ENCODE measurements at regions of chr1 and their contacts with region 1.

Region 1: GRCh38 chr1:221573756-221574155 is 168.1 kb downstream of the DUSP10 start:
- DNase-seq: peak in 1 of 2 donors; percentile 63
- ATAC-seq: peak; percentile 54 to 89 (median 80)
- H3K4me3 ChIP-seq: no peak overlapping the region
- H3K27ac ChIP-seq: no peak overlapping the region
- H3K4me1 ChIP-seq: peaks cover 13% of the 10 kb centered on the region
- H3K27me3 ChIP-seq: no peaks in the 10 kb centered on the region
- CTCF ChIP-seq: no peak

Region 2: GRCh38 chr1:219757890-219758289 is 1815.9 kb before region 1 on chr1:
- intact Hi-C with region 1: no loop called
- DNase-seq: no peak
- ATAC-seq: no peak
- H3K4me3 ChIP-seq: no peak overlapping the region
- H3K27ac ChIP-seq: no peak overlapping the region
- H3K4me1 ChIP-seq: no peaks in the 10 kb centered on the region
- H3K27me3 ChIP-seq: no peaks in the 10 kb centered on the region
- CTCF ChIP-seq: no peak

Region 3: GRCh38 chr1:221612264-221612777 is 38.6 kb after region 1 on chr1:
- intact Hi-C with region 1: loop called in 1 of 2 experiments (anchors 5 kb)
- DNase-seq: peak; percentile 62 to 81
- ATAC-seq: peak; percentile 94 to 100 (median 96)
- H3K4me3 ChIP-seq: no peak overlapping the region
- H3K27ac ChIP-seq: peak overlapping the region; percentile 59
- H3K4me1 ChIP-seq: peaks cover 13% of the 10 kb centered on the region
- H3K27me3 ChIP-seq: no peaks in the 10 kb centered on the region
- CTCF ChIP-seq: no peak